ENCODE measurements at regions of chr3 and their contacts with region 1.

Region 1: GRCh38 chr3:62665598-62666437 is 209.4 kb downstream of the CADPS start:
- DNase-seq: peak; percentile 2
- ATAC-seq: peak; percentile 93
- H3K4me3 ChIP-seq: no peak overlapping the region
- H3K27ac ChIP-seq: no peak overlapping the region
- H3K4me1 ChIP-seq: no peaks in the 10 kb centered on the region
- H3K27me3 ChIP-seq: no peaks in the 10 kb centered on the region; a peak in 1 of 4 replicates
- CTCF ChIP-seq: peak; percentile 65 to 67 (median 66)
- EP300 ChIP-seq: no peak
- POLR2A ChIP-seq: no peak
- RAD21 ChIP-seq: peak; percentile 78

Region 2: DNA sequence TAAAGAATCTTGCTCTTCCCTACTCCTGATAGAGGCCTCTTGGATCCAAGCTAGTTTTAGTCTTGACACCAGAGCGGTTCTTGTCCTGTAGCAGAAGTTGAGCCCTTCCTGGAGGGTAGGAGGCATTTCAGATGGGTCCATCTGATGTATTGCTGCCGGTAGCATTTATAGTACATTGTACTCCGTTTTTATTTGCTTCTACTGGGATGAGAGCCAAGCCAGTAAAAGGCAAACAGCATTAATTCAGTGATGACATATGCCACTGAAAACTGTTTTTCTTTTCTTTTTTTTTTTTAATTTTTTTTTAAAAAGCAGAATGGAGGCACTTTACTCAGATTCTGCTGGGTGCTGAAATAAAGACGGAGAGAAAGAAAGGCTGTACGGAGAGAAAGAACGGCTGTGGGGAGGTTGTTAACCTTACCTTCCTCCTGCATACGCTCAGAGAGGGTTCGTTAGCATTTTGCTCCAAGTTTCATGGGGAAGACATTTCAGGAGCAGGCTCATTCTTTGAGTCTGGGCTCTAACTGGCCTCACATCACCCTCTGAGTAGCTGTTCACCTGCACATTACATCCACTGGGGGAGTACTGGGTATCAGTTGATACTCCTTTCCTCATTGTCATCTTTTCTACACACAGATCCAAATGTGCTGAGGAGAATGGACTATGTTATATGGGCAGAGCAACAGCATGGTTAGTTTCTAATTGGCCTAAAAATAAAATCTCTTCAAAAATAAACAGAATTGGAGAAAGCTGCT is 454.0 kb before region 1 on chr3:
- CTCF ChIA-PET with region 1: no interaction called
- POLR2A ChIA-PET with region 1: no interaction called
- RAD21 ChIA-PET with region 1: no interaction called
- SMC1A ChIA-PET with region 1: no interaction called
- in situ Hi-C with region 1: no loop called
- intact Hi-C with region 1: no loop called
- DNase-seq: no peak
- ATAC-seq: no peak
- H3K4me3 ChIP-seq: no peak overlapping the region
- H3K27ac ChIP-seq: no peak overlapping the region
- H3K4me1 ChIP-seq: no peaks in the 10 kb centered on the region
- H3K27me3 ChIP-seq: no peaks in the 10 kb centered on the region
- CTCF ChIP-seq: no peak
- EP300 ChIP-seq: no peak
- POLR2A ChIP-seq: no peak
- RAD21 ChIP-seq: no peak

Region 3: GRCh38 chr3:62803276-62803675 is 137.5 kb after region 1 on chr3:
- CTCF ChIA-PET with region 1: interaction called, 3 read pairs
- POLR2A ChIA-PET with region 1: no interaction called
- RAD21 ChIA-PET with region 1: no interaction called
- SMC1A ChIA-PET with region 1: no interaction called
- in situ Hi-C with region 1: no loop called
- intact Hi-C with region 1: loop called (anchors 10 kb)
- DNase-seq: no peak
- ATAC-seq: 0 out of 3 replicates have a peak, but pooled peaks have one; percentile 21
- H3K4me3 ChIP-seq: no peak overlapping the region
- H3K27ac ChIP-seq: no peak overlapping the region
- H3K4me1 ChIP-seq: no peaks in the 10 kb centered on the region
- H3K27me3 ChIP-seq: no peaks in the 10 kb centered on the region; a peak in 1 of 4 replicates
- CTCF ChIP-seq: no peak
- EP300 ChIP-seq: no peak
- POLR2A ChIP-seq: no peak
- RAD21 ChIP-seq: no peak

Region 4: DNA sequence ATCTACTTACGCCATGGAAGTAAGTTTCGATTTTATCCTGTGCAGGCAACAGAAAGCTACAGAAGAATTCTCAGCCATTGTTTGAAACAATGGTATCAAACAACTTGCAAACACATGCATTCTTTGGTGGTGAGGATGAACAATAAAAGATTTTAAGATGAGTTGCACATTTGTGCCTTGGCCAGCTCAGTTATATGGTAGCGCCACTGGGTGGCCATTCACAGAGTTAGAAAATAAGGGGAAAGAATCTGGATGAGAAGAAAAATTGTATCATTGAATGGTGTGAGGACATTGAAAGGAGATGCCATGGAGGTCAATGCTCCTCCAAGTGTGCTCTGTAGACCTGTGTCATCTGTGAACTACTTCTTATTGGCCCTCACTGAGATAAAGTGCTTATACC is 197.8 kb after region 1 on chr3:
- CTCF ChIA-PET with region 1: no interaction called
- POLR2A ChIA-PET with region 1: no interaction called
- RAD21 ChIA-PET with region 1: no interaction called
- SMC1A ChIA-PET with region 1: no interaction called
- in situ Hi-C with region 1: no loop called
- intact Hi-C with region 1: loop called (anchors 5 kb)
- DNase-seq: no peak
- ATAC-seq: no peak
- H3K4me3 ChIP-seq: no peak overlapping the region
- H3K27ac ChIP-seq: no peak overlapping the region
- H3K4me1 ChIP-seq: no peaks in the 10 kb centered on the region
- H3K27me3 ChIP-seq: no peaks in the 10 kb centered on the region
- CTCF ChIP-seq: no peak
- EP300 ChIP-seq: no peak
- POLR2A ChIP-seq: no peak
- RAD21 ChIP-seq: no peak

Region 5: GRCh38 chr3:62922086-62922725 is 256.4 kb after region 1 on chr3:
- CTCF ChIA-PET with region 1: interaction called, 3 read pairs
- POLR2A ChIA-PET with region 1: no interaction called
- RAD21 ChIA-PET with region 1: no interaction called
- SMC1A ChIA-PET with region 1: no interaction called
- in situ Hi-C with region 1: no loop called
- intact Hi-C with region 1: loop called (anchors 1 kb)
- DNase-seq: no peak
- ATAC-seq: no peak
- H3K4me3 ChIP-seq: no peak overlapping the region
- H3K27ac ChIP-seq: no peak overlapping the region
- H3K4me1 ChIP-seq: no peaks in the 10 kb centered on the region
- H3K27me3 ChIP-seq: no peaks in the 10 kb centered on the region
- CTCF ChIP-seq: no peak
- EP300 ChIP-seq: no peak
- POLR2A ChIP-seq: no peak
- RAD21 ChIP-seq: no peak

Region 6: GRCh38 chr3:63193629-63194028 is 527.8 kb after region 1 on chr3:
- CTCF ChIA-PET with region 1: interaction called, 3 read pairs
- POLR2A ChIA-PET with region 1: no interaction called
- RAD21 ChIA-PET with region 1: interaction called, 4 read pairs
- SMC1A ChIA-PET with region 1: no interaction called
- in situ Hi-C with region 1: no loop called
- intact Hi-C with region 1: loop called (anchors 1 kb)
- DNase-seq: no peak
- ATAC-seq: no peak
- H3K4me3 ChIP-seq: no peak overlapping the region
- H3K27ac ChIP-seq: no peak overlapping the region
- H3K4me1 ChIP-seq: no peaks in the 10 kb centered on the region
- H3K27me3 ChIP-seq: no peaks in the 10 kb centered on the region
- CTCF ChIP-seq: no peak; a peak in 1 of 6 replicates
- EP300 ChIP-seq: no peak
- POLR2A ChIP-seq: no peak
- RAD21 ChIP-seq: peak; percentile 49

Region 7: GRCh38 chr3:63228087-63229023 is 562.5 kb after region 1 on chr3:
- CTCF ChIA-PET with region 1: interaction called, 16 read pairs
- POLR2A ChIA-PET with region 1: no interaction called
- RAD21 ChIA-PET with region 1: interaction called, 3 read pairs
- SMC1A ChIA-PET with region 1: interaction called, 8 read pairs
- in situ Hi-C with region 1: loop called (anchors 5 kb)
- intact Hi-C with region 1: loop called (anchors 2 kb)
- DNase-seq: no peak
- ATAC-seq: peak; percentile 84
- H3K4me3 ChIP-seq: no peak overlapping the region
- H3K27ac ChIP-seq: no peak overlapping the region
- H3K4me1 ChIP-seq: no peaks in the 10 kb centered on the region
- H3K27me3 ChIP-seq: no peaks in the 10 kb centered on the region
- CTCF ChIP-seq: peak; percentile 23 to 48 (median 47); a peak in 4 of 6 replicates
- EP300 ChIP-seq: no peak
- POLR2A ChIP-seq: no peak
- RAD21 ChIP-seq: peak; percentile 50; the same call in 1 of the 2 replicates

Region 8: DNA sequence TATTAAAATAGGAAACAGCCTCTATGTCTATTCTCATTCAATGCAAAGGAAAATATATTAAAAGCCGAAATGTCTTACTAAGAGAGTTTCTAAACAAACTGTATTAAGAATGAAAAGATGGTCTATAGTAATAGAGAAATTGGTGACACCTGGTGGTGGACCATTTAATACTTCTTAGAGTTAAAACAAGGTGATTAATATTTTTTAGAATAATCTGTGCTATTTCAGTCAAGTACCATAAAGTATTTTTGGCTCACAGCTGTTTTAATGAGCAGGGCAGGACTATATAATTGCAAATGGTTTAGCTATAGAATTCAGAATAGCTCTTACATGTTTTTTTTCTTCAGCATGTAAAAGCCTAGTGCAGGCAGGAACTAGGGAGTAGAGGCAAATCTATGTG is 668.0 kb after region 1 on chr3:
- CTCF ChIA-PET with region 1: interaction called, 3 read pairs
- POLR2A ChIA-PET with region 1: no interaction called
- RAD21 ChIA-PET with region 1: interaction called, 5 read pairs
- SMC1A ChIA-PET with region 1: no interaction called
- in situ Hi-C with region 1: no loop called
- intact Hi-C with region 1: loop called (anchors 10 kb)
- DNase-seq: no peak
- ATAC-seq: no peak
- H3K4me3 ChIP-seq: no peak overlapping the region
- H3K27ac ChIP-seq: no peak overlapping the region
- H3K4me1 ChIP-seq: no peaks in the 10 kb centered on the region
- H3K27me3 ChIP-seq: no peaks in the 10 kb centered on the region
- CTCF ChIP-seq: peak in 1 of 3 experiments; percentile 1; a peak in 1 of 6 replicates
- EP300 ChIP-seq: no peak
- POLR2A ChIP-seq: no peak
- RAD21 ChIP-seq: no peak

Measured in GM12878 (cell line).